Left ventricle myocardium superior (tissue), 1 donor: ENCODE measurements at regions of chr18 and their contacts with region 1.

Region 1: DNA sequence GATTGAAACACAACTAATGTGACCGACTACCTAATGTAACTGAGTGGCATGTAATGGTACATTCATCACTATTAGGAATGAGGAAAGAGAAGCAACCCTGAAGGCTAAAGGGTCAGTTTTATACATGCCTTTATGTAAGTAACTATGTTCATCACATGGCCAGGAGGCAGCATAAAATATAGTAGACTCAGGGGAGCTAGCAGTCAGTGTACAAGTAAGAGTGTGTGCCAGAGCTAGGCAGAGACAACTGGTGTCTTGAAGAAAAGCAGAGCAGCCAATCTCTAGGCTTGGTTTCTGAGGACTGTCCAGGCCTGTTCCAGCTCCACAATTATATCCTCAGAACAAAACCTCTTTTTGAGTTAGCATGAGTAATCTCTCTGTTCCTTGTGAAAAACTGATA is 18.1 kb downstream of the SMAD2 start:
- DNase-seq: no peak
- ATAC-seq: peak; percentile 65

Region 2: GRCh38 chr18:47863041-47863440 is 49.3 kb before region 1 on chr18:
- intact Hi-C with region 1: loop called (anchors 10 kb)
- DNase-seq: no peak
- ATAC-seq: peak; percentile 98